ENCODE measurements at regions of chr15 and their contacts with region 1.

Region 1: DNA sequence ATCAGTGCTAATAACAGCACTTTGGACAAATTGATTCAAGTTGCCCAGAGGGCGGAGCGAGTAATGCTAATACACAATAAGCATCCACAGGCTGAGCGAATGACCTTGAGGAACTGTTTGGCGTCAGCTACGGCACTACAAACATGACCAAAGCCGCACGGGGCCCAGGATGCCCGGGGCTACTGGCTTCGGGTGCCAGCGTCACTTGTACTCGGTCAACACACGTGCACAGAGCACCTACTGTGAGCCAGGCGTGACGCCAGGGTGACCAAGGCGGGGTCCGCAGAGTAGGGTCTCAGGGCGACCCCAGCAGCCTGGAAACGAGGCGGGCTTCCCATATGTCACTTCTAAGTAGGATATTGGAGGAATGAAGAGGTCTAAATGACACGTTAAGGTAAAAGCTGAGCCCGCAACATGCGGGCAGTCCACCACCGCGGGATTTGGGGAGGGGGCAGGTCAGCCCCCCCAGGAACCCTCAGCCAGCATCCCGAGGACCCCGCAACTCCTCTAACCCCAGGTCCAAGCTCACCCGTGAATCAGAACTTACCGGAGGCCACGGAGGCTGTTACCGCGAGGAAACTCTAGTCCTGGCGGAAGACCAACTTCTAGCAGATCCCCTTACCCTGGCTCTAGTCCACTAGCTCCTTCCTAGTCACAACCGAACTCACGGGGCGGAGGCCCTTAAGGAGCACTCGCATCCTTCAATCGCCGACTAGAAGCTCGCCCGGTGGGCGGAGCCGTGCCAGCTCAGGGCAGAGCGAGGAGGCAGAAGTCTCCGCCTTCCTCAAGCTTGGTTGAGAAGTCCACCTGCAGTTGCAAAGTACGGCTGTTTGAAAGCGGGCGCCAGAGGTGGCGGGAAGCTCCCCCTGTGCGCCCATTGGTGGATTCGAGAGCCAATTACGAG is at the start of gene CEP152:
- DNase-seq: peak; percentile 93
- ATAC-seq: peak; percentile 96
- H3K4me3 Mint-ChIP-seq: peak within 1 kb of the TSS; percentile 94
- H3K27ac Mint-ChIP-seq: peak within 1 kb of the TSS; percentile 86
- H3K4me1 Mint-ChIP-seq: peaks cover 24% of the 10 kb centered on the region
- H3K27me3 Mint-ChIP-seq: peaks cover 3% of the 10 kb centered on the region
- CTCF ChIP-seq: no peak
- total RNA-seq, gene CEP152: 12.1 and 15.4 TPM in 2 replicates

Region 2: GRCh38 chr15:48352474-48353072 is 458.1 kb before region 1 on chr15:
- CTCF ChIA-PET with region 1: no interaction called
- POLR2A ChIA-PET with region 1: no interaction called
- intact Hi-C with region 1: loop called (anchors 2 kb)
- DNase-seq: no peak
- ATAC-seq: peak; percentile 77
- H3K4me3 Mint-ChIP-seq: no peak overlapping the region
- H3K27ac Mint-ChIP-seq: no peak overlapping the region
- H3K4me1 Mint-ChIP-seq: peaks cover 2% of the 10 kb centered on the region
- H3K27me3 Mint-ChIP-seq: no peaks in the 10 kb centered on the region
- CTCF ChIP-seq: peak; percentile 97

Region 3: GRCh38 chr15:48877630-48878595 is 67.2 kb after region 1 on chr15 and contains the start of gene EID1:
- CTCF ChIA-PET with region 1: interaction called, 3 read pairs
- POLR2A ChIA-PET with region 1: interaction called, 18 read pairs
- intact Hi-C with region 1: loop called (anchors 1 kb)
- DNase-seq: peak; percentile 90
- ATAC-seq: peak; percentile 95
- H3K4me3 Mint-ChIP-seq: peak within 1 kb of the TSS; percentile 99
- H3K27ac Mint-ChIP-seq: peak within 1 kb of the TSS; percentile 97
- H3K4me1 Mint-ChIP-seq: peaks cover 27% of the 10 kb centered on the region
- H3K27me3 Mint-ChIP-seq: peaks cover 3% of the 10 kb centered on the region
- CTCF ChIP-seq: no peak
- total RNA-seq, gene EID1: 51.3 and 54.4 TPM in 2 replicates

Region 4: GRCh38 chr15:49155110-49155833 is 344.6 kb after region 1 on chr15 and contains the start of gene COPS2:
- CTCF ChIA-PET with region 1: no interaction called
- POLR2A ChIA-PET with region 1: interaction called, 11 read pairs
- intact Hi-C with region 1: loop called (anchors 1 kb)
- DNase-seq: peak; percentile 78
- ATAC-seq: peak; percentile 93
- H3K4me3 Mint-ChIP-seq: peak within 1 kb of the TSS; percentile 95
- H3K27ac Mint-ChIP-seq: peak within 1 kb of the TSS; percentile 95
- H3K4me1 Mint-ChIP-seq: peaks cover 43% of the 10 kb centered on the region
- H3K27me3 Mint-ChIP-seq: no peaks in the 10 kb centered on the region
- CTCF ChIP-seq: no peak
- total RNA-seq, gene COPS2: 53.1 and 54.4 TPM in 2 replicates

Region 5: GRCh38 chr15:49620658-49621368 is 810.1 kb after region 1 on chr15 and contains the starts of genes DTWD1 and FAM227B:
- CTCF ChIA-PET with region 1: no interaction called
- POLR2A ChIA-PET with region 1: interaction called, 3 read pairs
- intact Hi-C with region 1: loop called (anchors 1 kb)
- DNase-seq: peak; percentile 90
- ATAC-seq: peak; percentile 96
- H3K4me3 Mint-ChIP-seq: peak within 1 kb of the TSS; percentile 96
- H3K27ac Mint-ChIP-seq: peak within 1 kb of the TSS; percentile 96
- H3K4me1 Mint-ChIP-seq: peaks cover 31% of the 10 kb centered on the region
- H3K27me3 Mint-ChIP-seq: no peaks in the 10 kb centered on the region
- CTCF ChIP-seq: no peak
- total RNA-seq, gene DTWD1: 20.5 and 21.4 TPM in 2 replicates
- total RNA-seq, gene FAM227B: 4.3 and 4.5 TPM in 2 replicates

Region 6: GRCh38 chr15:50686468-50687301 is 1876.0 kb after region 1 on chr15 and contains the start of gene TRPM7:
- CTCF ChIA-PET with region 1: no interaction called
- POLR2A ChIA-PET with region 1: no interaction called
- intact Hi-C with region 1: loop called (anchors 2 kb)
- DNase-seq: peak; percentile 92
- ATAC-seq: peak; percentile 80
- H3K4me3 Mint-ChIP-seq: peak within 1 kb of the TSS; percentile 99
- H3K27ac Mint-ChIP-seq: peak within 1 kb of the TSS; percentile 92
- H3K4me1 Mint-ChIP-seq: peaks cover 58% of the 10 kb centered on the region
- H3K27me3 Mint-ChIP-seq: no peaks in the 10 kb centered on the region
- CTCF ChIP-seq: no peak
- total RNA-seq, gene TRPM7: 59.4 and 64.7 TPM in 2 replicates

Measured in activated B cell treated with CpG ODN at 0.5 μM for 24 hours (primary cell).